Posterior vena cava (tissue), 2 donors: ENCODE measurements at regions of chr9 and their contacts with region 1.

Region 1: DNA sequence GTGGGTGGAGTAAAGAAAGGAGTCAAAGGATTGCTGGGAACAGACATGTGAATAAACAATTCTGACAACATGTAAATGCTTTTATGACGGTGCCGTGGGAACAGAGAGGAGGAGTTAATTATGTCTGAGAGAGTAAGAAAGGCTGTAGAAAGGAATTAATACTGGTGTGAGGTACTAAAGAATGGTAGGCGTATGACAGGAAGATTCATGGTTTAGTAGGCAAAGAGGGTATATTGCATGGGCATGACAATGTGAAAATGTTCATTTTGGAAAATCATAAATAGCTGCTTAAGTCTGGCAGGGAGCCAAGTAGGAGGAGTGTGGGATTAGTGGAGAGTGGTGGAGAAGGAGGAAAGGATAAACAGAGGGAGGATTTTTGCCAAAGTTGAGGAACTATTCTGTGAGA is 19.7 kb downstream of the NAA35 start:
- DNase-seq: no peak

Region 2: GRCh38 chr9:86027767-86028166 is 67.1 kb after region 1 on chr9:
- intact Hi-C with region 1: loop called in 1 of 2 experiments (anchors 2 kb)
- DNase-seq: no peak